Uterus (tissue), 4 donors: ENCODE measurements at regions of chr7 and their contacts with region 1.

Region 1: DNA sequence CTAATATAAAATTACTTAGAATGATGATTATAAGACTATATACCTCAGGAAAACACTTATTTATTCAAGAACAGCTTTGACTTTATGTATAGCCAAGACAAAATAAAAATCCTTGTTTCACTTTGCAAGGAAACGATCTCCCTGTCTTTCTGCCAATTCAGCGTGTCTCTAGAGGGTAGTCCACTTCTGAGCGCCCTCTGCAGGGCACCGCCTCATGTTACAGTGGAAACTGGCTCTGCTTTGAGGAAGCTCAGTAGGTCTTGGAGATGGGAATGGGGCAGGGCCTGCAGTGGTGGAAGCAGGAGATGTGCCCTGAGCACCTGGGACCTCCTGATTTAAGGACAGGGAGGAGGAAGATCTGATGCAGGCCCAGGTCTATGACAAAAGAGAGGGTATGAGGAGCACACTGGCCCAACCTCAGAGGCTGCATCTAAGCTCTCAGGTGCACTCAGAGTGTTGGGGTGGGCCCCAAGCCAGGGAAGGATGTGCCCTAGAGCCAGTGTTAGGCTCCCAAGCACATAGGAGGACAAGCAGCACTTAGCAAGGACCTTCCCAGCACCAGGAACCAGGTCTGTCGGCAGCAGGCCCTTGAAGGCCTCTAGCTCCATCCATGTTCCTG is 481.0 kb downstream of the TNS3 start:
- DNase-seq: peak in 1 of 2 donors; percentile 31
- H3K4me3 ChIP-seq: no peak overlapping the region
- H3K27ac ChIP-seq: no peak overlapping the region
- H3K4me1 ChIP-seq: no peaks in the 10 kb centered on the region
- H3K27me3 ChIP-seq: no peaks in the 10 kb centered on the region
- CTCF ChIP-seq: peak in 2 of 4 experiments; percentile 13 to 16
- POLR2A ChIP-seq: no peak

Region 2: GRCh38 chr7:45917658-45918057 is 1183.3 kb before region 1 on chr7:
- intact Hi-C with region 1: loop called (anchors 5 kb)
- DNase-seq: peak; percentile 87 to 88
- H3K4me3 ChIP-seq: peak overlapping the region in 1 of 2 donors; percentile 76
- H3K27ac ChIP-seq: peak overlapping the region; percentile 40 to 89
- H3K4me1 ChIP-seq: peaks cover 0 to 4% of the 10 kb centered on the region in 2 donors
- H3K27me3 ChIP-seq: no peaks in the 10 kb centered on the region
- CTCF ChIP-seq: peak; percentile 84 to 95 (median 92)
- POLR2A ChIP-seq: no peak

Region 3: GRCh38 chr7:47153076-47153475 is 52.1 kb after region 1 on chr7:
- intact Hi-C with region 1: no loop called
- DNase-seq: peak in 1 of 2 donors; percentile 72
- H3K4me3 ChIP-seq: no peak overlapping the region
- H3K27ac ChIP-seq: peak overlapping the region; percentile 18 to 25
- H3K4me1 ChIP-seq: no peaks in the 10 kb centered on the region
- H3K27me3 ChIP-seq: no peaks in the 10 kb centered on the region
- CTCF ChIP-seq: no peak
- POLR2A ChIP-seq: no peak